A673 (cell line): ENCODE measurements at regions of chr9 and their contacts with region 1.

Region 1: DNA sequence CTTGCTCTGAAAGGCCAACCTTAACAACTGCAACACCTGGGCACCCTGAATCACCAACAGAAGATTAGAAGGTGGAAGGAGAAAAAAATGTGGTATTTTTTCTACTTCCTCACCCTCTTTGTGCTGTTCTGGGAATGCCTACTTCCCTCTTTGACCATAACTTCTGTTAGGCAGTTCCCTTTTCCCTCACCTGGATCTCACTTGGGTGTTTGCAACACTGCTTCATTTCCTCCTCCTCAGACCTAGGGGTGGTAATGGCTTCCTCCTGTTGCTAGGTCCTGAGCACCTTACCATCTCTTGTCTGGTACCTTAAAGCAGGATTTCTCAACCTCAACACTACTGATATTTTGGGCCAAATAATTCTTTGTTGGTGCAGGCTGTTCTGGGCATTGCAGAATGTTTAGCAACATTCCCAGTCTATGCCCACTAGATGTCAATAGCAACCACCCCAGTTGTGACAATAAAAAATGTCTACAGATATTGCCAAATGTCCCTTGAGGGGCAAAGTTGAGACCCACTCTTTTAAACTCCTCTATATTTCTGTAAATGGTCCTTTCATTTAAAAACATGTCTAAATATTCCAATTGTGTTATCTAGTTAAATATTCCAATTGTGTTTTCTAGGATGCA is 299.9 kb upstream of the VLDLR start:
- DNase-seq: peak; percentile 10
- H3K4me3 ChIP-seq: no peak overlapping the region
- H3K27ac ChIP-seq: no peak overlapping the region
- H3K4me1 ChIP-seq: no peaks in the 10 kb centered on the region
- H3K27me3 ChIP-seq: no peaks in the 10 kb centered on the region
- CTCF ChIP-seq: peak; percentile 27; the same call in 1 of the 2 replicates

Region 2: DNA sequence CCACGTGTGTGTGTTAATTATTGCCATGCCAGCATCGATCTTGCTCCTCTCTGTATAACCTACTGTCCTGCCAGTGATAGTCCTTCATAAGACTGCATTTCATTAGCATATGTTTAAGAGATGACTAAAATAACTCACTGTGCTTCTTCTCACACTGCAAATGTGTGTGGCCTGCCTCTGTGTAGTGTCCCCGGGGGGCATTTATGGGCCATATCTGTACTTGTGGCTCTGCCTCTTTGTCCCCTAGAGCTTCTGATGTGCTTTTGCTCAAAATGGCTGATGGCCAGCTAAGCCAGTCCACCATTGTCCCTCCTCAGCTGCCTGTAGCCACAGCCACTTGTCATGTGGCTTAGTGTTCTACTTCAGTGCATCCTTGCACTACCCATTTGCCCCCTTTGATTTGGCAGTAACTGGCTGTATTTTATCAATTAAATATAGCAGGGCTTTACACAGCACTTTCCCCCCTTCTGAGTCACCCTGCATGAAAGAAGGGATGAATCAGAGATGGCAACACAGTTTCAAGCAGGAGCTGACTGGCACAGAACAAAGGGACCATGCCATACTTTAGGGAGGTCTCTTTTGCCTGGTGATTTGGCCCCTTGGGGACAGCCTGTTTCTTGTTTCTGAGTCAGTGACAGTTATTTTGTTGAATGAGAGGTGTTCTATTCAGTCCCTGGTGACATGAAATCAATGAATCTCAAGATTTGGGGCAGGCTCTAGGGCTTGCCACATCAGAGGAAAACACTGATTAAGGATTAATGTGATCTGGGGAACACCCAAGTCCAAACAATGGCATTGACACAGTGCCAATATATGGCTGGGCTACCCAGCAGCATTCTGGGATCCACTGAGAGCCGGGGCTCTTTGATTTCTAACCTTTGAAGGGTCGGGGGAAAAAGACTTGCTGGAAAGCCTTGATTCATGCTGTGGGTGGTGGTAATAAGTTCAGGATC is 61.0 kb before region 1 on chr9:
- CTCF ChIA-PET with region 1: no interaction called
- POLR2A ChIA-PET with region 1: no interaction called
- intact Hi-C with region 1: loop called (anchors 10 kb)
- DNase-seq: peak; percentile 58
- H3K4me3 ChIP-seq: no peak overlapping the region
- H3K27ac ChIP-seq: no peak overlapping the region
- H3K4me1 ChIP-seq: peaks cover 11% of the 10 kb centered on the region
- H3K27me3 ChIP-seq: no peaks in the 10 kb centered on the region
- CTCF ChIP-seq: no peak

Region 3: GRCh38 chr9:2386566-2386965 is 64.9 kb after region 1 on chr9:
- CTCF ChIA-PET with region 1: no interaction called
- POLR2A ChIA-PET with region 1: interaction called, 11 read pairs
- intact Hi-C with region 1: no loop called
- DNase-seq: no peak
- H3K4me3 ChIP-seq: no peak overlapping the region
- H3K27ac ChIP-seq: no peak overlapping the region
- H3K4me1 ChIP-seq: no peaks in the 10 kb centered on the region
- H3K27me3 ChIP-seq: peaks cover 6% of the 10 kb centered on the region
- CTCF ChIP-seq: no peak

Region 4: DNA sequence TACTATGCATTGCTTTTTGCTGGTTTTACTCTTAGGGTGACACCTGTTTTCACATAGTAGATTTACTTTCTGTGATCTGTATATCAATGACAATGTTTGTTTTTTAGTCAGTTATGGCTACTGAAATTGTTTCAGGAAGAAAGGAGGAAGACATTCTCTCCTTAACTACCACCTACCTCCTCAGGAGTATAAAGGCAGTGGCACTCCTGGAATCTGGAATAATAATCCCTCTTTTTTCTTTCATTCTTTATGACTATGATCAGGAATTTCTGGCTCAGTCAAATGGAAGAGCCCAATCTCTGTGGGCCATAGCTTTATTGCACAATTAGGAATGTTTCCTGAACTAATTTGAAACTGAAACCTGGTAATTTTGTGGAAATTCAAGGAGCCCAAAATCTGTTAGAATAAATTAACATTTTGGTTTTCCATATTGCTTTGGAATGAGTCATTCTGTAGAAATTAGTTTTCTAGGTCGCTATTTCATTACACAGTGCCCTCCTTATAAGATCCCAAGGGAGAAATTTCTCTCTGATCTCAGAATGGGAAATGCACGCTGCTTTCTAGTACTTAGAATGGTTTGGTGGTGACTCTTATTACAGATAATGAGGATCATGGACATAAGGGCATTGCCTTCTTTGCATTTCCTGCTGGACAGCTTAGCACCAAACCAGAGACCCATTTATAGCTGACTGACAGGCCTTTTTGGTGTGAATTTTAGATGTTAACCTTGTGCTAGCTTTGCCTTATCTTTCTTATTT is 204.6 kb after region 1 on chr9:
- CTCF ChIA-PET with region 1: no interaction called
- POLR2A ChIA-PET with region 1: no interaction called
- intact Hi-C with region 1: loop called (anchors 10 kb)
- DNase-seq: no peak
- H3K4me3 ChIP-seq: no peak overlapping the region
- H3K27ac ChIP-seq: no peak overlapping the region
- H3K4me1 ChIP-seq: no peaks in the 10 kb centered on the region
- H3K27me3 ChIP-seq: no peaks in the 10 kb centered on the region
- CTCF ChIP-seq: no peak

Region 5: GRCh38 chr9:2809691-2810433 is 488.2 kb after region 1 on chr9:
- CTCF ChIA-PET with region 1: no interaction called
- POLR2A ChIA-PET with region 1: no interaction called
- intact Hi-C with region 1: loop called (anchors 10 kb)
- DNase-seq: peak; percentile 79
- H3K4me3 ChIP-seq: no peak overlapping the region
- H3K27ac ChIP-seq: no peak overlapping the region
- H3K4me1 ChIP-seq: peaks cover 17% of the 10 kb centered on the region
- H3K27me3 ChIP-seq: no peaks in the 10 kb centered on the region
- CTCF ChIP-seq: no peak